ENCODE measurements at regions of chr17 and their contacts with region 1.

Region 1: GRCh38 chr17:74697515-74697914 is 15.2 kb downstream of the CD300LF start:
- DNase-seq: no peak
- H3K4me3 ChIP-seq: no peak overlapping the region
- H3K27ac ChIP-seq: no peak overlapping the region
- H3K4me1 ChIP-seq: no peaks in the 10 kb centered on the region
- H3K27me3 ChIP-seq: peaks cover 63% of the 10 kb centered on the region
- CTCF ChIP-seq: no peak

Region 2: GRCh38 chr17:74671031-74671771 is 26.3 kb before region 1 on chr17:
- CTCF ChIA-PET with region 1: no interaction called
- POLR2A ChIA-PET with region 1: no interaction called
- intact Hi-C with region 1: no loop called
- DNase-seq: peak; percentile 88
- H3K4me3 ChIP-seq: no peak overlapping the region
- H3K27ac ChIP-seq: no peak overlapping the region
- H3K4me1 ChIP-seq: no peaks in the 10 kb centered on the region
- H3K27me3 ChIP-seq: peaks cover 73% of the 10 kb centered on the region
- CTCF ChIP-seq: no peak

Region 3: GRCh38 chr17:74981979-74982662 is 284.6 kb after region 1 on chr17:
- CTCF ChIA-PET with region 1: no interaction called
- POLR2A ChIA-PET with region 1: interaction called, 13 read pairs
- intact Hi-C with region 1: no loop called
- DNase-seq: peak; percentile 85
- H3K4me3 ChIP-seq: peak overlapping the region; percentile 52
- H3K27ac ChIP-seq: peak overlapping the region; percentile 21
- H3K4me1 ChIP-seq: peaks cover 13% of the 10 kb centered on the region
- H3K27me3 ChIP-seq: no peaks in the 10 kb centered on the region
- CTCF ChIP-seq: no peak

Measured in A673 (cell line).